Posterior cingulate gyrus (tissue), 11 donors: ENCODE measurements at regions of chr17 and their contacts with region 1.

Region 1: GRCh38 chr17:77542551-77543490 is 402.1 kb downstream of the SEC14L1 start:
- DNase-seq: peak; percentile 72 to 98 (median 86)

Region 2: GRCh38 chr17:77507111-77507885 is 35.5 kb before region 1 on chr17:
- intact Hi-C with region 1: no loop called
- DNase-seq: peak in 4 of 10 donors; percentile 14 to 85 (median 72)

Region 3: DNA sequence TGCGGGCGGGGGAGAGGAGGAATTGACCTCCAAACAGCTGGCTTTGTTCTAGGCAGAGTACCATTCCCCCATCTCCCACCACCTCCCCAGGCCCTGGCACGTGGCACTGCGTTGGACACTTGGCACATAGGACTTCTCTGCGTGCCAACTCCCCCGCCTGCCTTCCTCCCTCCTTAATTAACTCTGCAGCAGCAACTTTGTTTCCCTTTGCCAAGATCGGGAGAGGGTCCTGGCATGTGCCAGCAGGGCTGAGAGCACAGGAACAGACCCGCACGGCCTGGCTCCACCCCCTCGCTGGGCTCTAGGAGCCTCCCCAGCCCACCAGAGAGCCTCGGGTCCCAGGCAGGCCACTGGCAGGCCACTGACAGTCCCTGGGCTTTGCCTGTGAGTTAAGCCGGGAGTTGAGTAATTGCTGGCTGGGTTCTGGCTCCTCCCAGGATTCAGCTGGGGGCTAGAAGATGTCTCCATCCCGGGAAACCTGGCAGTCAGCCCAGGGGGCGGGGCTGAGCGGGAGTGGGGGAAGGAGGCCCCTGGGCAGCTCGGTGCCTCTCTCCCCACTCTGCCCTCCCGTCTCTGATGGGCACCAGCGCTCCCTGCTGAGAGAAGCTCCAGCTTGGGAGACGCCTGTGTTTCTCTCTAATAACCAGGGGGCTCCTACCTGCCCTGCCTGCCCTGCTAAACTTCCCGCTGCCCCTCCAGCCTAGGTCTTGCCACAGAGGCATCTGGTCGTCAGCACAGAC is 191.7 kb after region 1 on chr17:
- intact Hi-C with region 1: loop called (anchors 5 kb)
- DNase-seq: peak; percentile 73 to 98 (median 90)

Region 4: GRCh38 chr17:77957857-77958715 is 415.3 kb after region 1 on chr17 and contains the start of gene TNRC6C:
- intact Hi-C with region 1: loop called (anchors 5 kb)
- DNase-seq: peak; percentile 99 to 100 (median 100)

Region 5: GRCh38 chr17:78013683-78014467 is 471.1 kb after region 1 on chr17:
- intact Hi-C with region 1: loop called (anchors 5 kb)
- DNase-seq: peak in 4 of 10 donors; percentile 28 to 51 (median 38)